Left colon (tissue), 2 donors: ENCODE measurements at regions of chr2 and their contacts with region 1.

Region 1: GRCh38 chr2:219543601-219544358 is at the starts of genes CHPF and TMEM198:
- DNase-seq: peak; percentile 98
- ATAC-seq: peak; percentile 85
- total RNA-seq, gene CHPF: 27.8 to 37.2 TPM
- total RNA-seq, gene TMEM198: 1.4 to 1.6 TPM

Region 2: GRCh38 chr2:219642465-219643080 is 98.8 kb after region 1 on chr2:
- intact Hi-C with region 1: loop called in 1 of 2 experiments (anchors 10 kb)
- DNase-seq: peak; percentile 94 to 97
- ATAC-seq: peak; percentile 99

Region 3: DNA sequence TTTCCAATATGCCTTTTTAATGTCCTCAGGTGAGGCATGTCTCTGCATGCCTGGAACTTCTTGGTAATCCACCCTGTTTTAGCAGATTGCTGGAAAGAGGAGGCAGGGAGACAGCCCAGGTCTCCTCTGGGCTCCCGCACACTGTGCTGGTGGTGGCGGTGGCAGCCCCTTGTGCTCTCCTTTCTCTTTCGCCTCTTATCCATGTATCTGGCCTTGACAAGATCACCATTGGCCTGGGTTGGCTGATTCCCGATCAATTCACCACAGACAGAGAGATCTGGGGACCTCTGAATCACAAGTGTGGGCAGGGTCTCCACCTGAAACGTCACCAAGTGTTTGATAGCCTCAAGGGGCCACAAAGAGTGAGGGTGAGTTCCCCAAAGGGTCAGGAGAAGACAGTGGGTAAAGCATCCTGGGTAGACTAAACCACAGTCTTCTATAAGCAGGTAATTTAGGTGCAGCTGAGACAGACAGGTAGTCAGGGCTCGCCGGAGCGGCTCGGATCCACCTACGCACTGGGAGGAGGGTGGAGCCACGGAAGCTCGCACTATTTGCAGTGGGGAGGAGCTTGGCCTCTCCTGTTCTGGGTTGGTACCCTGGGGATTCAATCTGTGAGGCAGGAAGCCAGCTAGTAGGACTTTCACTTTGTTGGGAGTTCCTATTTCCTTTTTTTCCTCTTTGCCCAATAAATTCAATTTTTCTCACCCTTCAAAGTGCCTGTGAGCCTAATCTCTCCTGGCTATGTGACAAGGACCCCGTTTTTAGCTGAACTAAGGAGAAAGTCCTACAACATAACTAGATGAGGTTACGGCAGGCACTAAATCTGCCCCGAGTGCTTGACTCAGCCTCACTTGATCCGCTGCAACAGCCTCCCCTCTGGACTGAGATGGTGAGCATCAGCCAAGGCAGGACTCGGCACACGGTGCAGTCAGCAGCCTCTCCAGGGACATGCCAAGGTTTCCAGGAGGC is 141.2 kb after region 1 on chr2:
- intact Hi-C with region 1: no loop called
- DNase-seq: peak; percentile 78 to 81
- ATAC-seq: peak; percentile 100